HCT116 (cell line): ENCODE measurements at regions of chr20 and their contacts with region 1.

Region 1: GRCh38 chr20:4091490-4092479 is 76.4 kb upstream of the RNF24 start:
- DNase-seq: no peak
- ATAC-seq: peak; percentile 93
- H3K4me3 ChIP-seq: no peak overlapping the region
- H3K27ac ChIP-seq: no peak overlapping the region
- H3K4me1 ChIP-seq: no peaks in the 10 kb centered on the region
- H3K27me3 ChIP-seq: no peaks in the 10 kb centered on the region
- CTCF ChIP-seq: peak; percentile 69 to 82 (median 72); a peak in 5 of 6 replicates
- POLR2A ChIP-seq: no peak
- RAD21 ChIP-seq: peak; percentile 74

Region 2: GRCh38 chr20:3786665-3787323 is 305.0 kb before region 1 on chr20 and contains the start of gene CENPB:
- CTCF ChIA-PET with region 1: no interaction called
- POLR2A ChIA-PET with region 1: no interaction called
- RAD21 ChIA-PET with region 1: no interaction called
- intact Hi-C with region 1: loop called (anchors 5 kb)
- DNase-seq: peak; percentile 57
- ATAC-seq: peak; percentile 88
- H3K4me3 ChIP-seq: peak within 1 kb of the TSS; percentile 68 to 70
- H3K27ac ChIP-seq: peak within 1 kb of the TSS; percentile 81
- H3K4me1 ChIP-seq: peaks cover 25 to 40% of the 10 kb centered on the region in 2 experiments
- H3K27me3 ChIP-seq: no peaks in the 10 kb centered on the region
- CTCF ChIP-seq: peak; percentile 58 to 91 (median 67)
- POLR2A ChIP-seq: no peak
- RAD21 ChIP-seq: peak; percentile 84
- total RNA-seq, gene CENPB: 67.2 TPM

Region 3: GRCh38 chr20:3888622-3889488 is 202.9 kb before region 1 on chr20 and contains the start of gene PANK2:
- CTCF ChIA-PET with region 1: no interaction called
- POLR2A ChIA-PET with region 1: no interaction called
- RAD21 ChIA-PET with region 1: no interaction called
- intact Hi-C with region 1: loop called (anchors 5 kb)
- DNase-seq: peak; percentile 99
- ATAC-seq: peak; percentile 94
- H3K4me3 ChIP-seq: peak within 1 kb of the TSS; percentile 68 to 83
- H3K27ac ChIP-seq: peak within 1 kb of the TSS; percentile 98
- H3K4me1 ChIP-seq: peaks cover 34 to 43% of the 10 kb centered on the region in 2 experiments
- H3K27me3 ChIP-seq: no peaks in the 10 kb centered on the region
- CTCF ChIP-seq: peak; percentile 32 to 48 (median 40); a peak in 4 of 6 replicates
- POLR2A ChIP-seq: peak; percentile 52
- RAD21 ChIP-seq: peak; percentile 59
- total RNA-seq, gene PANK2: 41.6 TPM